PC-9 (cell line): ENCODE measurements at regions of chr5 and their contacts with region 1.

Region 1: DNA sequence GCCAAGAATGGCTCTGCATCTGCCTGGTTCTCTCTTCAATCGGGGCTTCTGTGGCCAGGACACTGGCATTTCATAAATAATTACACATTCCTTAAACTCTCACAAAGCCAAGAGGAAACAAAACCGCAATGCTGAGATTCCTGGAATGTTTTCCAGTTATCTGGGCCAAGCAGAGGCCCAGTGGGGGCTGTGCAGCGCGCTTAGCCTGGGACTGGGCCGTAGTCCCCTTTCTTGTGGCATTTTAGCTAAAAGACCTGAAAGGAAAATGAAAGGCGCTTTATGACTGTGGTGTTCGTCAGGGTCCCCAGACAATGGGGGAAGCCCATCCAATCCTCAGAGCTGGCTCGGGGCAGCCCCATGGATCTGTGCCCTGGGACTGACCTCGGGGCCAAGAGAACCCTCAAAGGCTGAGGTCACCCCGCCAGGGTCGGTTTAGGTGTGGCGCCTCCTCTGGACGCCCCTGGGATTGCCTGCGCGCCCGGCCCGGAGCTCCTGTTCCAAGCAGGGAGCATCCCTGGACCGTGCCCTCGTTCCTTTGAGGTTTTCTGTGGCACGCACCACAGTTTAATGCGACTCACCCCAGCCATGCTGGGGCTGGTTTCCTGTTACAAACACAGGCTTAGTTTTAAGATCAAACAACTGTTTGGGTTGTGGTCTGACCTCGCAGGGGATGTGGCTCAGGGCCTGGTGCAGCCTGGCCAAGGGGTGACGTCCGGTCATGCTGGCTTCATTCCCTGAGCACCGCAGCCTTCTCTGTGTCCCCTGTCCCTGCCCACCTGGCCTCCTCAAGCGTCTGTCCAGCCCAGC is 51.5 kb upstream of the NKD2 start:
- DNase-seq: peak; percentile 51 to 63
- H3K4me3 ChIP-seq: no peak overlapping the region
- H3K27ac ChIP-seq: no peak overlapping the region
- H3K4me1 ChIP-seq: no peaks in the 10 kb centered on the region
- H3K27me3 ChIP-seq: peaks cover 96% of the 10 kb centered on the region
- CTCF ChIP-seq: peak; percentile 43; the same call in 1 of the 2 replicates

Region 2: DNA sequence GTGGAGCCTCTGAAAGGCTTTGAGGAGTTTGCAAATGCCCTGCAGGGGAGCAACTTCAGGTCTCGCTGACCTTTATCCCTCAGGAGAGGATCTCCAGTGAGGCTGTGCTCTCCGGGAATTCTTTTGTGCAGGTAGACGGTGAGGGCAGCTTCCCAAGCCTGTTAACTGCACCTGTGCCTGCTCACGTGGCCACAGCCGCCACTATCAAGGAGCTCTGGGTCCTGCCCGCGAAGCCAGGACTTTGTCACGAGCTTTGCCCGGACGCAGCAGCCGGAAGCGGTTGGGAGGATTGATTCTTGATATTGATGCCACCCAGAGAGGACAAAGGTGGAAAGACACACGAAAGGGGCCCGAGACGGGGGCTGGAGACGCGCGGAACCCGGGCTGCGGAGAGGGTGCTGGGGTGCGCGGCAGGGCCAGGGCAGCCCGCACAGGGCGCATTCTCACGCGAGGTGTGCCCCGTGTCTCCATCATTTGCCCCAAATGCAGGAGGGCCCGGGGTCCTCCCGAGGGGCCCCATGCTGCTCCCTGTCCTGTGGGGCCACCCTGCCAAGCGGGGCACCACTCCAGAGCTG is 451.1 kb before region 1 on chr5:
- CTCF ChIA-PET with region 1: no interaction called
- POLR2A ChIA-PET with region 1: no interaction called
- intact Hi-C with region 1: no loop called
- DNase-seq: no peak
- H3K4me3 ChIP-seq: no peak overlapping the region
- H3K27ac ChIP-seq: no peak overlapping the region
- H3K4me1 ChIP-seq: no peaks in the 10 kb centered on the region
- H3K27me3 ChIP-seq: peaks cover 84% of the 10 kb centered on the region
- CTCF ChIP-seq: no peak

Region 3: DNA sequence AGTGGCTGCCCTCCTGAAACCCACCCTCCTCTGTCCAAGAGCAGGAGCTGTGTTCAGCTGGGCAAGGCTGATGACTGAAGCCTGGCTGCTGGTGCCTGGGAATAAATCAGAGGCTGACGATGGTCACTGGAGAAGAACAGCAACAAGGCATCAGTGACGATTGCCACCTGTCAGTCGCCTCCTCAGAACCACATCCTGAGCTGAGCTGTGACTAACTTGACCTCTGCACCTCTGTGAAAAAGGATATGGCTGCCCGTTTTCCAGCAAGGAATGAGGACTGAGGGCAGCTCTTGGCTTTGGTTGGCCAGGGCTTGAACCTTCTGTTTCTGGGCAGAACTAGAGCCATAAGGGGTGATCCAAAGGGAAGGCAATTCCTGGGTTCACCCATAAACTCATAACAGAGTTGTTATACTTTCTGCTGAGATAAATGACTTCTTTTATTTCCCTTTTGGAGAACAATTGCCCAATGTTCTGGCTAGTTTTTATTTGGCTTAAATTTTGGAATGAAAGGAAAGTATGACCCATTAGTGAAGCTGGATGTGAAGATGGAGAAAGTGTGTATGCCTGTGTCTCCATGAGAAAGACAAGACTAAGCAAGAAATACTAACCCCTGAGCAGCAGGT is 24.4 kb before region 1 on chr5:
- CTCF ChIA-PET with region 1: interaction called, 10 read pairs
- POLR2A ChIA-PET with region 1: no interaction called
- intact Hi-C with region 1: no loop called
- DNase-seq: no peak
- H3K4me3 ChIP-seq: no peak overlapping the region
- H3K27ac ChIP-seq: no peak overlapping the region
- H3K4me1 ChIP-seq: 0 out of 2 replicates have a peak, but pooled peaks cover 6% of the 10 kb centered on the region
- H3K27me3 ChIP-seq: peaks cover 46% of the 10 kb centered on the region
- CTCF ChIP-seq: no peak

Region 4: GRCh38 chr5:989961-990530 is 32.9 kb after region 1 on chr5:
- CTCF ChIA-PET with region 1: interaction called, 12 read pairs
- POLR2A ChIA-PET with region 1: no interaction called
- intact Hi-C with region 1: no loop called
- DNase-seq: peak in 1 of 2 experiments; percentile 52
- H3K4me3 ChIP-seq: no peak overlapping the region
- H3K27ac ChIP-seq: no peak overlapping the region
- H3K4me1 ChIP-seq: peaks cover 8% of the 10 kb centered on the region
- H3K27me3 ChIP-seq: peaks cover 87% of the 10 kb centered on the region
- CTCF ChIP-seq: 0 out of 2 replicates have a peak, but pooled peaks have one; percentile 21

Region 5: DNA sequence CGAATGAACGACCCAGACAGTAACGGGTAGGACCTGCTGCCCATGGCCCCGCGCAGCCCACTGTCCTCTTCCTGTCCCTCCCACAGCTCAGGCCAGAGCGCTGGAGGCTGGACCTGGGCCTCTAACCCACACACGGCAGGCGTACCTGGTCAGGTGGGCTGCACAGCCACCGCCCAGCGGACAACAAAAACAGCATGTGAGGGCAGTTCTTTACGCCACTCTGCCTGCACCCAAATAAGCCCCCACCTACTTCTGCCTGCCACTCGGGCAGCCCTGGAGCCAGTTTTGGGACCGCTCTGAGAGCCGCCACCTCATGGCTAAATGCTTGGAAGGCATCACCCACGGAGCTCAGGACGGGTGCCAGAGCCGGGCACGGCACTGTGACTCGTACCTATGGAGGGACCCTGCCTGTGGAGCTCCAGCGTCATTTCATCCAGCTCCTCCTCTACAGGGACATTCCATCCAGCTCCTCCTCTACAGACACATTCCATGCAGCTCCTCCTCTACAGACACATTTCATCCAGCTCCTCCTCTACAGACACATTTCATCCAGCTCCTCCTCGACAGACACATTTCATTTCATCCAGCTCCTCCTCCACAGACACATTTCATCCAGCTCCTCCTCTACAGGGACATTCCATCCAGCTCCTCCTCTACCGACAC is 368.9 kb after region 1 on chr5:
- CTCF ChIA-PET with region 1: no interaction called
- POLR2A ChIA-PET with region 1: no interaction called
- intact Hi-C with region 1: no loop called
- DNase-seq: peak in 1 of 2 experiments; percentile 38
- H3K4me3 ChIP-seq: peak overlapping the region; percentile 7; the same call in 1 of the 2 replicates
- H3K27ac ChIP-seq: peak overlapping the region; percentile 86
- H3K4me1 ChIP-seq: peaks cover 38% of the 10 kb centered on the region
- H3K27me3 ChIP-seq: no peaks in the 10 kb centered on the region
- CTCF ChIP-seq: no peak